Tibial artery (tissue), 4 donors: ENCODE measurements at regions of chr2 and their contacts with region 1.

Region 1: DNA sequence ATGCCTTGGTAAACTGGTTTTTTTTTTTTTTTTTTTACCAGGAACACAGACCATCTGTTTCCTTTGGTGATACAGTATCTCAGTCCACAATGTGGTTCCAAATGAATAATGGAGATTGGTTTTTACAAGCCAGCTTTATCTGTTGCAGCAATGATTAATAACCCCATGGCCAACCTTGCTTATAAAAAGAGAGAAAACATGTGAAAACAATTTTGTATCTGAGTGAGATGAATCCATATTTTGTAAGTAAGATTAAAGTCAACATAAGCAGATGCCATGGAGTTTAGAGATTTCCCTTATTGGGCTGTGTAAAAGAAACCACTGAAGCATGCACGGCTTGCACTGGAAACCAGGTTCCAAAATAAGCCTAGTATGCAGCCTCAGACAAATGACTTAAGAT is 108.6 kb upstream of the CNTNAP5 start:
- DNase-seq: no peak
- H3K4me3 ChIP-seq: no peak overlapping the region
- H3K27ac ChIP-seq: no peak overlapping the region
- H3K4me1 ChIP-seq: no peaks in the 10 kb centered on the region
- H3K27me3 ChIP-seq: no peaks in the 10 kb centered on the region
- CTCF ChIP-seq: no peak

Region 2: GRCh38 chr2:123359636-123360035 is 556.9 kb before region 1 on chr2:
- intact Hi-C with region 1: loop called (anchors 5 kb)
- DNase-seq: no peak
- H3K4me3 ChIP-seq: no peak overlapping the region
- H3K27ac ChIP-seq: no peak overlapping the region
- H3K4me1 ChIP-seq: no peaks in the 10 kb centered on the region
- H3K27me3 ChIP-seq: no peaks in the 10 kb centered on the region
- CTCF ChIP-seq: no peak